OCI-LY7 (cell line): ENCODE measurements at regions of chr4 and their contacts with region 1.

Region 1: DNA sequence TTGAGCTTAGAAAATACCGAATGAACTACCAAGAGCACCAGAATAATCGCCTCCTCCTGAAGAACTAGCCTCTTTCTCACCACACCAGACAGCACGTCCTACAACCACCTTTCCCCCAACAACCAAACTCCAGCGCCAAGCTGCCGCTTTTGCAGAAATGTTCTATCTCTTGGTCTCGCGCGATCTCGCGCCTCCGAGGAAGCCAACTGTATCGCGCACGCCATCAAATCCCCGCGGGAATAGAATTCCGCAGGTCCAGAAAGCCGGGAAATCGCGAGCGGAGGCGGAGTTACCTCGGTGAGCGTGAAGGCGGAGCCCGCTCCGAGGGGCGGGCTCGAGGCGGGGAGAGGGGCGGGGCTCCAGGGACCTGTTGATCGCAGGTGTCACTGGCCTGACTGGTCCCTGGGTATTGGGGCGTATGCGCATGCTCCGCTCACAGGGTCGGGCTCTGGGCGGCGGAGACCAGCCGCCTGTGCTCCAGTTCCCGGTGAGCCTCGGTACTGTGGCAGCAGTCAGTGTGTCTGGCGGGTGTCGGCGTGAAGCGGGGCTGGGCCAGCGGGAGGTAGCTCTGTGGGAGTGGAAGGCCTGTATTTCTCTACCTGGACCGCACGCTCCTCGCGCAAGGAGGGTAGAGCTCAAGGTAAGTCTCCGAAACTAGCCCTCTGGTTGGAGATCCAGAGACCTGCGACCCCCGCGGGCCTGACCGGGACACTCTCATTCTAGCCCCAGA is at the start of gene USP53:
- DNase-seq: peak; percentile 95
- H3K4me3 ChIP-seq: peak within 1 kb of the TSS; percentile 73
- H3K27ac ChIP-seq: peak within 1 kb of the TSS; percentile 76
- H3K4me1 ChIP-seq: peaks cover 23% of the 10 kb centered on the region
- CTCF ChIP-seq: no peak
- total RNA-seq, gene USP53: 4.9 and 6.7 TPM in 2 replicates

Region 2: GRCh38 chr4:118765399-118765798 is 447.0 kb before region 1 on chr4:
- CTCF ChIA-PET with region 1: no interaction called
- POLR2A ChIA-PET with region 1: no interaction called
- intact Hi-C with region 1: loop called (anchors 5 kb)
- DNase-seq: no peak
- H3K4me3 ChIP-seq: no peak overlapping the region
- H3K27ac ChIP-seq: no peak overlapping the region
- H3K4me1 ChIP-seq: peaks cover 37% of the 10 kb centered on the region
- CTCF ChIP-seq: no peak

Region 3: GRCh38 chr4:118835571-118836300 is 376.7 kb before region 1 on chr4 and contains the start of gene SEC24D:
- CTCF ChIA-PET with region 1: no interaction called
- POLR2A ChIA-PET with region 1: interaction called, 4 read pairs
- intact Hi-C with region 1: loop called (anchors 5 kb)
- DNase-seq: peak; percentile 87
- H3K4me3 ChIP-seq: peak within 1 kb of the TSS; percentile 97
- H3K27ac ChIP-seq: peak within 1 kb of the TSS; percentile 67
- H3K4me1 ChIP-seq: peaks cover 39% of the 10 kb centered on the region
- CTCF ChIP-seq: no peak; the same call in 1 of the 2 replicates
- total RNA-seq, gene SEC24D: 10.7 and 15.1 TPM in 2 replicates

Region 4: GRCh38 chr4:118881512-118882146 is 330.8 kb before region 1 on chr4:
- CTCF ChIA-PET with region 1: no interaction called
- POLR2A ChIA-PET with region 1: no interaction called
- intact Hi-C with region 1: no loop called
- DNase-seq: no peak
- H3K4me3 ChIP-seq: no peak overlapping the region
- H3K27ac ChIP-seq: no peak overlapping the region
- H3K4me1 ChIP-seq: no peaks in the 10 kb centered on the region
- CTCF ChIP-seq: no peak

Region 5: DNA sequence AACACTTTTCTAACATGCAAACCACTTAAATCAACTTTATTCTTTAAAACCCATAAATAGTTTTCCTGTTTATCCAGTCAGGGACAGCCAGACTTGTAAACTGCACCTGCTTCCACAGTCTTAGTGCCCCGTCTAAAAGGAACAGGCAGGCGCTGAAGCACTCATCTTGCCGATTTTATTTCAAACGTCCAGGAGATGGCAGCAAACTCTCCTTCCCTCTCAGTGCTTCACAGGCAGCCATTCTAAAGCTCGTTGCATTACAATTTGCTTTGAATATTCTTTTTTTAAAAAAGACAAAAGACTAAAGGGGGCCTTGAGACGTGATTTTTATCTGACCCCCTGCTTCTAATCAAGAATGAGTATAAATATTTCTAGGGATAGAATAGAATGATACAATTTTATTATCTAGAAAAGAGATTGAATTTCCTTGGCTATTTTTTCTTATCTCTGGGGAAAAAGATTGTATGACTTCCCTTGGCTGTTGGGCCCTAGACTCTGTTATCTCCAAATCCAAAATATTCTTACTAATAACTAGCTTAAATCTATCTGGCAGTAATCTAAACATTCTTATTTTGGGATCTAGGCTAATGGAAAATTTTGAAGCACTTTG is 170.3 kb before region 1 on chr4:
- CTCF ChIA-PET with region 1: no interaction called
- POLR2A ChIA-PET with region 1: interaction called, 6 read pairs
- intact Hi-C with region 1: loop called (anchors 2 kb)
- DNase-seq: peak; percentile 81
- H3K4me3 ChIP-seq: no peak overlapping the region
- H3K27ac ChIP-seq: peak overlapping the region; percentile 6
- H3K4me1 ChIP-seq: peaks cover 22% of the 10 kb centered on the region
- CTCF ChIP-seq: peak; percentile 89

Region 6: GRCh38 chr4:119286377-119287002 is 74.1 kb after region 1 on chr4:
- CTCF ChIA-PET with region 1: no interaction called
- POLR2A ChIA-PET with region 1: interaction called, 4 read pairs
- intact Hi-C with region 1: loop called (anchors 2 kb)
- DNase-seq: peak; percentile 57
- H3K4me3 ChIP-seq: no peak overlapping the region
- H3K27ac ChIP-seq: no peak overlapping the region
- H3K4me1 ChIP-seq: peaks cover 4% of the 10 kb centered on the region
- CTCF ChIP-seq: peak; percentile 87

Region 7: GRCh38 chr4:119300101-119300978 is 87.9 kb after region 1 on chr4:
- CTCF ChIA-PET with region 1: interaction called, 3 read pairs
- POLR2A ChIA-PET with region 1: interaction called, 14 read pairs
- intact Hi-C with region 1: loop called (anchors 1 kb)
- DNase-seq: peak; percentile 93
- H3K4me3 ChIP-seq: peak overlapping the region; percentile 95
- H3K27ac ChIP-seq: peak overlapping the region; percentile 91
- H3K4me1 ChIP-seq: peaks cover 25% of the 10 kb centered on the region
- CTCF ChIP-seq: peak; percentile 39; the same call in 1 of the 2 replicates

Region 8: DNA sequence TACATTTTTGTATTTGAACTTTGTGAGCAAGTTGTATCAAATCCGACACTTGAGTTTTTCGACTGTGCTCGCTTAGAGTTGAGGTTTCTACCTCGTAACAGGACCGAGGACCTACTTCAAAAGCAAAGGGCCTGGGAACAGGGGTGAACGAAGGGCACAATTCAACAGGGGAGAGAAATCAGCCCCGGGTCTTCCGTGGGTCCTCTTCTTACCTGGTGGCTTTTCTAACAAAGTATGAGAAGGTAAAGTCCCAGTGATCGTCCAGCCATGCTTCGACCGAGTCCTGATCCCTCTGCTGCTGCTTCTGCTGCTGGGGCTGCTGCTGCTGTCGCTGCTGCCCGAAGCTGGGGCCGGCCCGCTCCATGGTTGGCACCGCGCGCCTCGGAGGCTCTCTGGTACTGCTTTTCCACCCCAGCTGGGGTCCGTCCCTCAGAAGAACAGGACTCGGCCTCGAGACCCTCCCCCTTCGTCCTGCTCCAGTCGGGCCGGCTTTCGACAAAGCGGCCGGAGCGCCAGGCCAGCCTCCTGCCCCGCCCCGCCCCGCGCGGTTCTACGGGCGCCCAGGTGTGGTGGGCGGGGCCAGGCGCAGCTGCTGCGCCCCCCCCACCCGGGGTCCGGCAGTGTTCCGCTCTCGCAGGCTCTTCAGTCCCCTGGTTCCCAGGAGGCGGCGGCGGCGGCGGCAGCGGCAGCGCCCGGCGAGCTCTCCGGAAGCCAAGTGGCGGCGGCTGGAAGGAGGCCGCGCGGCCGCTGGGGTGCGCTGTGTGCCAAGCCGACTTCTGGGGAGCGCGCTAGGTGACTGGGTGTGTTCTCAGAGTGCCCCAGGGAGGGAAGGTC is 416.1 kb after region 1 on chr4 and contains the start of gene PDE5A:
- CTCF ChIA-PET with region 1: no interaction called
- POLR2A ChIA-PET with region 1: no interaction called
- intact Hi-C with region 1: loop called (anchors 5 kb)
- DNase-seq: peak; percentile 68
- H3K4me3 ChIP-seq: peak within 1 kb of the TSS; percentile 62
- H3K27ac ChIP-seq: no peak within 1 kb of the TSS
- H3K4me1 ChIP-seq: peaks cover 13% of the 10 kb centered on the region
- CTCF ChIP-seq: peak; percentile 70
- total RNA-seq, gene PDE5A: 0.22 and 1.5 TPM in 2 replicates